ENCODE measurements at regions of chr3 and their contacts with region 1.

Region 1: DNA sequence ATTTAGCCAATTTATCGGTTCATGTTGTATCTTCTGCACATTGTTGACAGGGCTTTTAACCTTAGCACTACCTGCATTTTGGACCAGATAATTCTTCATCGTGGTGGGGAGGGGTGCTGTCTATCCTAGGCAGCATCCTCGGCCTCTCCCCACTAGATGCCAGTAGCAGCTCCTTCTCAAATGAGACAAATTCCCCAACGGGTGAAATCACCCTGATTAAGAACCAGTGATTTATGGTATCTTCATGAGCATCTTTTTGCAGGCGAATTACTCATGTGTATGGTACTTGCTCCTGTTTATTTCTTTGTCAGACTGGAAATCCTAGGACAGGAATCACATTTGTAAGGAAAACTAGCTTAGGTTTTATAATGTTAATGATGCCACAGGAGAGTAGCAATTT is 68.0 kb downstream of the C3orf70 start:
- DNase-seq: no peak
- H3K4me3 ChIP-seq: no peak overlapping the region
- H3K27ac ChIP-seq: no peak overlapping the region
- H3K4me1 ChIP-seq: no peaks in the 10 kb centered on the region
- H3K27me3 ChIP-seq: no peaks in the 10 kb centered on the region
- CTCF ChIP-seq: no peak
- POLR2A ChIP-seq: no peak

Region 2: GRCh38 chr3:185152410-185153210 is 67.7 kb after region 1 on chr3 and contains the start of gene C3orf70:
- intact Hi-C with region 1: loop called (anchors 5 kb)
- DNase-seq: peak; percentile 23
- H3K4me3 ChIP-seq: peak within 1 kb of the TSS; percentile 48 to 63
- H3K27ac ChIP-seq: peak within 1 kb of the TSS; percentile 74 to 81
- H3K4me1 ChIP-seq: no peaks in the 10 kb centered on the region
- H3K27me3 ChIP-seq: no peaks in the 10 kb centered on the region
- CTCF ChIP-seq: no peak
- POLR2A ChIP-seq: no peak
- total RNA-seq, gene C3orf70: 5.7 to 21.2 TPM

Region 3: DNA sequence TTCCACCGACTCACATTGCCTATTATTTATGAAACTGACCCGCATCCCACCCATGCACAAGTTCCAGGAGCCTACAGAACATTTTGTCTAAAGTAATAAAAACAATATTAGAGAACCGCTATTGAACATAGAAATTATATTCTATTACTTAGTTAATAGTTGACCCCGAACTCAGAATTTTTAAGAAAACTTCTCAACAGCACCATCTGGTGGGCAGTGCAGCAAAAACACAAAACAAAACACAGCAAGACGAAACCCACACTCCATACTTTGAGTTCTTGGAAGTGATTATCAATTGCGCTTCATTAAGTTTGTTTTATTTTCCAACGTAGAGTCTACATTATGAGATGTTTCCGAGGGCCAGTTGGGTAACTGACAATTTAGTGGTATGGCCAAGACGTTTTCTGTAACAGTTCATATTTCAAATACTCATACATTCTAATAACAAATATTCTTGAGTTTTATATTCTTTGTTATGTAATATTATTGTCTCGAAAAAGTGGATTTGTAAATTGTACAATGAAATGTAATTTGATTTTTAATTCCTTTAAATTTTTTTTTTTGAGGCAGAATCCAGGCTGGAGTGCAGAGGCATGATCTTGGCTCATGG is 92.0 kb after region 1 on chr3:
- intact Hi-C with region 1: loop called (anchors 5 kb)
- DNase-seq: no peak
- H3K4me3 ChIP-seq: no peak overlapping the region
- H3K27ac ChIP-seq: no peak overlapping the region
- H3K4me1 ChIP-seq: no peaks in the 10 kb centered on the region
- H3K27me3 ChIP-seq: no peaks in the 10 kb centered on the region
- CTCF ChIP-seq: peak; percentile 35 to 71 (median 58)
- POLR2A ChIP-seq: no peak